AG04449 (cell line): ENCODE measurements at regions of chr2 and their contacts with region 1.

Region 1: GRCh38 chr2:11697103-11697871 is 27.3 kb upstream of the NTSR2 start:
- DNase-seq: no peak
- H3K4me3 ChIP-seq: no peak overlapping the region
- CTCF ChIP-seq: no peak

Region 2: GRCh38 chr2:10802657-10803056 is 894.6 kb before region 1 on chr2:
- CTCF ChIA-PET with region 1: no interaction called
- POLR2A ChIA-PET with region 1: no interaction called
- DNase-seq: no peak
- H3K4me3 ChIP-seq: no peak overlapping the region
- CTCF ChIP-seq: no peak

Region 3: GRCh38 chr2:11710234-11710975 is 13.1 kb after region 1 on chr2:
- CTCF ChIA-PET with region 1: interaction called, 37 read pairs
- POLR2A ChIA-PET with region 1: no interaction called
- DNase-seq: no peak
- H3K4me3 ChIP-seq: no peak overlapping the region
- CTCF ChIP-seq: no peak

Region 4: DNA sequence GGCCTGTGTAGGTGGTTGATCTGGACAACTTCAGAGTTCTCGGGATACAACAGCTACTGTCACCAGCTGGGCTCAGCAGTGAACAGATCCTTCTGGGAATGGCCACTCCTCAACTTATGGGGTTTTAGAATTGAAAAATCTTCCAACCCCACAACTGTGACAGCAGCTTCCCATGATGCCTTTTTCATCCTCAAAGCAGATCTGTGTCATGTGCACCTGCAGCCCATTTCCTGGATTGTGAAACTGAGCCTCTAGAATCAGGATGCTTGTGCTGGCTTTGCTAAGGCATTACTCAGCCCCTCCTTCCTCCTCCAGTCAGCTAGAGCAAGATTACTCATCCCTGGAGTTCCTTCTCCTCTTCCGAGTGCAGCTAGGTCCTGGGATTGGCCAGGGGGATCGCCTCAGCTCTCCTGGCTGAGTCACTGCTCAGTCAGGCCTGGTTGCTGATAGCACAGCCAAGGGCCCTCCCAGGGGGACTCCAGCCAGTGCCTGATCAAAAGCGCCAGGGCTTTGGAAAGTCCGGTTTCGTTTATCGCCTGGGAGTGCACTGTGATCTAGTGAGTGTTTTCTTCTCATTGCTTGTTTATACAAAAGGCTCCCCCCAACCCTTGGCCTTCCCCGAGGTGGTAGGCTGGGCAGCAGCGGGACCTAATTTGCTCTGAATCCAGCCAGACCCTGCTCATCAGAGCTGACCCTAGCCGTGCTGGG is 46.7 kb after region 1 on chr2:
- CTCF ChIA-PET with region 1: interaction called, 12 read pairs
- POLR2A ChIA-PET with region 1: interaction called, 5 read pairs
- DNase-seq: peak; percentile 98
- H3K4me3 ChIP-seq: peak overlapping the region; percentile 40
- CTCF ChIP-seq: no peak

Region 5: DNA sequence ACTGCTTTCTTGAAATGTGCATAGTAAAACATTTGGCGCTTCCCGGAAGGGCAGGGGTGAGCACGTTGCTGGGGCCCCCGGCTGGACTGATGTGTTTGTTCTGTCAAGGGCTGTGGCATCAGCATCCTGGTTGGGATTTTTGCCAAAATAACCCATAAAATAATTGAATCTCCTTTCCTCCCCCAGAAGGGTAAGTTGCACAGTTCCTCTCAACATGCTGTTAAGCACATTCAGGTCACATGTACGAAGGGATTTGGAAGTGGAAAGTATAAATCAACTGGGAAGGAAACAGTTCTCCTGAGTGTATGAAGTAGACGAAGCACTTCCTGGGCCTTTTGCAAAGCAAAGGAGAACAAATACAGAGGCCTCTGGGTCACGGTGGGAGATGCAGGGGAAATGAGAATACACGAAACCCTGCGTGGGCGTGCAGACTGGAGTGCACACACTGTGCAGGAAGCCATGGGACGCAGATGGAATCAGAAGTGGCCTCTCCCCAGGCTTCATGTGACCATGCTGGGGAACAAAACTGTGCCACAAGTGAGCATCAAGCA is 233.0 kb after region 1 on chr2:
- CTCF ChIA-PET with region 1: no interaction called
- POLR2A ChIA-PET with region 1: no interaction called
- DNase-seq: no peak
- H3K4me3 ChIP-seq: no peak overlapping the region
- CTCF ChIP-seq: no peak